Posterior vena cava (tissue), 2 donors: ENCODE measurements at regions of chr4 and their contacts with region 1.

Region 1: GRCh38 chr4:8403173-8403753 is 37.3 kb downstream of the ACOX3 start:
- DNase-seq: peak; percentile 96

Region 2: DNA sequence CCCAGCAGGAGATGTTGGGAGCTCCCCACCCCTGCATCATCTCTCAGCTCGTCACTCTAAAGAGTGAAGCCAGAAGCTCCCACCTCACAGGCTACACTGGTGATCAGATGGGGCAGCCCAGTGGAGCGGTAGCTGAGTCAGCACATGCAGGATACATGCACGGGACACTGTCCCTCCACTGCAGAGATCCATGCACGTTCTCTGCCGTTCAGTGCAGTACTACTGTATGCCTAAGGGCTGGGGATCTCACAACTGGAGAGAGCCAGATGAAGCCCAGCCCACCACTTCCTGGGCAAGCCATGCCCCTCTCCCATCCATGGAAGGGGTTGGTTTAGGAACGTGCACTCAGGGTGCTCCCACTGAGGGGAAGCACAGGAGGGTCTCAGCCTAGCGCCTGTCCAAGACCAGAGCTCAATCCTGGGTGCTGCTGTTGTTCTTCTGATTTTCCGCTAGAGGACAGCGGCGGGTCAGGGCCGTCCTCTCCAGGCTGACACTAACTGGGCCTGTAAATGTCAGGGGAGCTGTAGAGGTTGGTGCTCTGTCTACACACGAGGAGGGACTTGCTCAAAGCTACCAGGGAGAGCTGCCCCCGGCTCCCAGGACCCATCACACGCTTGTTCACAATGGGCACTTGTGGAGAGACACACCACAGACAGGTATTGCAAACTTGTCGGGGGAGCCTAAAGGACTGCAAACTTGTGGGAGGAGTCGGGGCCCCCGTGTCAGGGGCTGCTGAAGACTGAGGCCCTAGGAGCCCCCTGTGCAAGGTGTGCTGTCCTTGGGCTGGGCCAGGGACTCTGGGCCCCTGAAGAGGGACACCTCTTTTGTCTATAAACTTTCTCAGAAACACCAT is 226.5 kb before region 1 on chr4:
- intact Hi-C with region 1: loop called in 1 of 2 experiments (anchors 10 kb)
- DNase-seq: no peak

Region 3: DNA sequence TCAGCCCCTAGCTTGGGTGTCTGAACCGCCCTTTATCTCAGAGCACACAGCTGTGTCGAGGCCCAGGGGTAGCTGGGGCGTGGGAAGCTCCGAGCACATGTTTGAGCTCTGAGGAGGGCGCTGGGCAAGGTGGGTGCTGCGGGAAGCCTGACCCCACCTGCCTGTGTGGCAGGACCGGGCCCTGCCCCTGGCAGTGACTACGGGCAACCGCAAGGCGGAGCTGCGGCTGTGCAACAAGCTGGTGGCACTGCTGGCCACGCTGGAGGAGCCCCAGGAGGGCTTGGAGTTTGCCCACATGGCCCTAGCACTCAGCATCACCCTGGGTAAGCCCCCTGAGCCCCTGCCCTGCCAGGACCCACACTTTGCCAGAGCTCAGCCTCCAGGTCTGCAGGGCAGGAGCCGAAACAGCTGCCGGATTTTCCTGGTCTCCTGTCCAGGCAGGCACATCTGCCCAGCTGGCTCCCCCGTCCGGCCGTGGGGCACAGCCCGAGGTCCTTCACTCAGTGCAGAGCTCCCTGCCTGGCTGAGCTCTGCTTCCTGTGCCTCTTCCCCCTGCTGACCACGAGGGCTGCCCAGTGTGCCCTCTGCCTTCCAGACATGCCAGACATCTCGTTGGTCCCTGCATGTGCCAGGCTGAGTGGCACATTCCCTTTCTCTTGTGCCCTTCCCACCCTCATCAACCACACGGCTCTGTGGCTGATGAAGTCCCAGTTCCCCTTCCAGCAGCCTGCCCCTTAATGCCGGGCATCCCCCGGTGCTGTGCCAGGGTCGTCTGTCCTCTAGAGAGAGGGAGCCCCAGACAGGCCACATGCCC is 166.9 kb before region 1 on chr4:
- intact Hi-C with region 1: loop called (anchors 1 to 2 kb)
- DNase-seq: no peak

Region 4: DNA sequence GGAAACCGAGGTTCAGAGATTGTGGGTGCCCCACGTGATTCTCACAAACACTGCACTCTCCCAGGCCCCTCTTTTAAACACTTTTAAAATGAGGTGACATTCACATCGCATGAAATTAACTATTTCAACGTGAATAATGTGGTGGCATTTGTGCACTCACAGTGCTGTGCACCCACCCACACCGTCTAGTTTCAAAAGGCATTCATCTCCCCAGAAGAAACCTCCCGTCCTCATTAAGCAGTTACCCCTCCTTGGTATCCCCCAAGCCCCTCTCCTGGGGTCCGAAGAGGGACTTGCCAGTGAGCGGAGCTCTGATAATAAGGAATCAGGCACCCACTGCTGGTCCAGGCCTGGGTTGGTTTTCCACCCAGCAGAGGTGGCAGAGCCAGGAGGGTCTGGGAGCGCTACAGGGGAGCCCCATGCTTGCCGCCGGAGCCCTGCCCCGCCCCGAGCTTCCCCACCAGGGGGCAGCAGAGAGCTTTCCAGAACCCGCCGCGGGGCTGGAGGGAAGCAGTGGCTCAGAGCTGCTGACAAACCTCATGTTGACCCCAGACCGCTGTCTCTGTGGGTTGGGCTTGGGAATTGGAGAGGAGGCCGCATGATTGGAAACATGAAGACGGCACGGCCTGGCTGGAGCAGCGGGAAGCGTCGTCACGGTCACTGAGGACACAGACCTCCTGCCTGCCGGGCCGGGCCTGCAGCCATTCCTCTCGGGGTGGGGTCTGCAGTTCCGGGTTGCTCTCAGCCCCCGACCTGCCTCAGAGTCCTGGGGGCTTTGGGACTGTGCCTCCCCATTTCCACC is 161.2 kb before region 1 on chr4:
- intact Hi-C with region 1: loop called (anchors 1 to 2 kb)
- DNase-seq: peak; percentile 97

Region 5: DNA sequence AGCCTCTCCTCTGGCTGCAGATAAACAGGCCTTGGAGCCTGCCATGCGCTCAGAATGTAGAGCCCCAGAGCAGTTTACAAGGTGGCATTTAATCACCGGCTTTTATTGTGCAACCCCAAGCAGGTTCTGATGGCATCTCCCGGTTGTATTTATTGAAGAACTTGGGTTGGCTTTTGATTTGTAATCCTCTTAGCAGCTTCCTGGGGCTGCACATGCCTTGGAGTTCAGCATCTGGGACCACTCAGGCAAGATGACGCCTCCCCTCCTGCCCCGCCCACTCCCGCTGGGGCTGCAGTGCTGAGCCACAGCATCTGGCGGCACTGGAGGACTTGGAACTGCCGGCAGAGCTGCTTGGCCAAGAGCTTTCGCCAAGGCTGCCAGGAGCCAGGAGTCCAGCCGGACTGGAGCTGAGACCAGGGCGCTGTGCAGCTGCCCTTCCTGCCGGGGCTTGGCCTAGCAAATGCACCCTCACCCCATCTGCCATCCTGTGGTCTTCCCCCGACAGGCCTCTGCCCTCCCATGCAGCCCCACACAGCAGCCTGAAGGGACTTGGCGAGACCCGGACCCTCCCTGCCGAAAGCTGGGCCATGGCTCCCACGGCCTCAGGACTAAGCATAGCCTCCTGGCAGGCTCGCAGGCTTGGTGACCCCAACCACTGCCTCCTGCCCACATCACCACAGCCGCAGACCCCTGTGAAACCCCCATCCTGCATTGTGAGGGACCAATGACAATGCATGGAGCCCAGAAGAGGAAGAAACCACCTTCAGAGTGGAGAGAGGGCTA is 128.3 kb before region 1 on chr4:
- intact Hi-C with region 1: loop called (anchors 2 to 10 kb)
- DNase-seq: peak; percentile 96